CD4-positive, alpha-beta memory T cell (primary cell): ENCODE measurements at regions of chr19 and their contacts with region 1.

Region 1: GRCh38 chr19:55385740-55386529 is at the start of gene RPL28:
- DNase-seq: peak; percentile 98 to 100 (median 99)
- H3K4me3 ChIP-seq: peak within 1 kb of the TSS; percentile 85 to 88
- H3K4me3 Mint-ChIP-seq: peak within 1 kb of the TSS; percentile 99 to 100 (median 100)
- H3K27ac ChIP-seq: peak within 1 kb of the TSS; percentile 94
- H3K27ac Mint-ChIP-seq: peak within 1 kb of the TSS; percentile 98 to 100 (median 99)
- H3K4me1 ChIP-seq: peaks cover 68% of the 10 kb centered on the region
- H3K4me1 Mint-ChIP-seq: peaks cover 39 to 88% (median 63%) of the 10 kb centered on the region in 4 donors
- H3K27me3 ChIP-seq: no peaks in the 10 kb centered on the region
- H3K27me3 Mint-ChIP-seq: no peaks in the 10 kb centered on the region
- total RNA-seq, gene RPL28: 3,136 to 3,159 TPM

Region 2: DNA sequence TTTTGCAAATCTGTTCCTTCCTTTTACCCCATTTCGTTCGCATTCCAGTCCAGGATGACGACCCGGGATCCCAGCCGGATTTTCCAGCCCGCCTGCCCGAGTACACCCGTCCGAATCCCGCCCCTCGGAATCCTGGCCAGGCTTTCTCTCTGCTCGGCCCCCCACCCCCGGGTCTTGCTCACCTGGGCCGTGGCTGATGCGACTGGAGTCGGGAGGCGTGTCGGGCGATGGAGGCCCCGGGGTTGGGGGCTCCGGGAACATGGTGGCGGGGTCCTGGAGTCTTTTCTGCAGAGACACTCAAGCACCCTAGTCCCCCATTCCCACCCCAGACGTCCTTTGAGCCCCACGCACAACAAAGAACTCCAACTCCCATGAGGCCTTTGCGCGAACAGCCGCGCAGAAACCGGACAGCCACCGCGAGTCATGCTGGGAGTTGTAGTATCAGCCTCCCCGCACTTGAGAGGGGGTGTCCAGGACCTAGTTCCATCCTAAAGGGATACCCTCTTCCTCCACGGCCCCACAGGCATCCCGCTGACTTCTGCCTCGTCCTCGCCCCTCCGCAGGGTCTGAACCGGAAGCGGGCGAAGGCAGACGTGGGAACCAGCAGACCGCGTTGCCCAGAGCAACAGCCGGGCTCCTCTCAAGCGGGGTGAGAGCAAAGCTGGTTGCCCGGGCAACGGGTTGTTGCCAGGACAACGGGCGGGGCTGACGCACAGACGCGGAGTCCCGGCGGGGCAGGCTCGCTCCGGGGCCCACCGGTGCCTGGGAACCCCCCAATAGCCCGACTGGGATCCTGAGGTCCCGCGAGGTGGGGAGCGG is 206.9 kb before region 1 on chr19:
- CTCF ChIA-PET with region 1: no interaction called
- POLR2A ChIA-PET with region 1: no interaction called
- intact Hi-C with region 1: loop called (anchors 1 kb)
- DNase-seq: peak; percentile 94 to 98 (median 95)
- H3K4me3 ChIP-seq: peak overlapping the region; percentile 42 to 63
- H3K4me3 Mint-ChIP-seq: peak overlapping the region; percentile 66 to 88 (median 83)
- H3K27ac ChIP-seq: peak overlapping the region; percentile 46
- H3K27ac Mint-ChIP-seq: peak overlapping the region; percentile 87 to 99 (median 96)
- H3K4me1 ChIP-seq: peaks cover 30% of the 10 kb centered on the region
- H3K4me1 Mint-ChIP-seq: peaks cover 12 to 37% (median 23%) of the 10 kb centered on the region in 4 donors
- H3K27me3 ChIP-seq: peaks cover 50% of the 10 kb centered on the region
- H3K27me3 Mint-ChIP-seq: peaks cover 45 to 61% of the 10 kb centered on the region in 2 donors

Region 3: GRCh38 chr19:55279770-55280643 is 105.9 kb before region 1 on chr19 and contains the start of gene HSPBP1:
- CTCF ChIA-PET with region 1: interaction called, 4 read pairs
- POLR2A ChIA-PET with region 1: interaction called, 14 read pairs
- intact Hi-C with region 1: loop called (anchors 1 kb)
- DNase-seq: peak; percentile 96 to 97 (median 97)
- H3K4me3 ChIP-seq: peak within 1 kb of the TSS; percentile 95 to 98
- H3K4me3 Mint-ChIP-seq: peak within 1 kb of the TSS; percentile 92 to 100 (median 98)
- H3K27ac ChIP-seq: peak within 1 kb of the TSS; percentile 69
- H3K27ac Mint-ChIP-seq: peak within 1 kb of the TSS; percentile 87 to 100 (median 100)
- H3K4me1 ChIP-seq: peaks cover 39% of the 10 kb centered on the region
- H3K4me1 Mint-ChIP-seq: peaks cover 24 to 55% (median 34%) of the 10 kb centered on the region in 4 donors
- H3K27me3 ChIP-seq: no peaks in the 10 kb centered on the region
- H3K27me3 Mint-ChIP-seq: no peaks in the 10 kb centered on the region
- total RNA-seq, gene HSPBP1: 17.9 to 18.5 TPM